RWPE1 (cell line): ENCODE measurements at regions of chr2 and their contacts with region 1.

Region 1: DNA sequence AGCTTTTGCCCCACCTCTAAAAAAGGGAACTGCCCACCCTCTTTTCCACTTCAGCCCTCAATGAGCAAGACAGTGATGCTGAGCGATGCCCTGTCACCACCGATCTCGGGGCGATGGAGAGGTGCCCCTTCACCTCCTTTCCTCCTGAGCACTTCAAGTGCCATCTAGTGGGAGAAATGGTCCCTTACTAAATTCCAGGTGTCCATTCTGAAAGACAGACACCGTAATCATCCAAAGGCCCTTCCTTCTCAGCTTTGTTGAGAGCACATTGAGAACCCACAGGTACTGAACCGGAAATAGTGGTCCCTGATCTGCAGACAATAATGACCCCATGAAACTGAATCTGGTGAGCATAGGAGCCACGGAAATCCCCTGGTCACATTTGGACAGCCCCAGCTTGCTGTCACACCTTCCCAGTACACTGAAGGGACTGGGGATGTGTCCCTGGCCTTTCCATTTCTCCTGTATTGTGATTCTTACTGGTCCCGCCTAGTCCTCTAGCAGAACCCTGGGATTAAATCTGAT is 38.5 kb downstream of the KCTD18 start:
- DNase-seq: peak; percentile 32
- H3K27ac ChIP-seq: no peak overlapping the region
- CTCF ChIP-seq: peak; percentile 70

Region 2: DNA sequence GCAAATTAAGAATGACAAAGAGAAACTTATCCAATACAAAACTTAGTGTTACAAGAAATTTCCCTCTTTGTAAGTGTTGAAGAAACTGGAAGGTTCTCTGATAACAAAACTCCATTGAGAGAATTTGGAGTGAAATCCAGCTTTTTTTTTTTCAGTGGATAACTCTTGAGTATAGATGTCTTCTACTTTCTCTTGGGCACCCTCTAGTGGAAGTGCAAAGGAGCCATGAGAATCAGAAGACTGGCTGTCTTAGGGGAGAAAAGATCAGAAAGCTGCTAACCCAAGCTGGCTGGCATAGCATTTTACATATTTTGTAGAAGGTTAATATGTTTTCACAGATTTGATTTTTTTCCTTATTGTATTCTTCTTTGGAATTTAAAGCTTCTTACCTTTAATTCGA is 874.8 kb before region 1 on chr2:
- CTCF ChIA-PET with region 1: no interaction called
- POLR2A ChIA-PET with region 1: no interaction called
- DNase-seq: peak; percentile 8
- H3K27ac ChIP-seq: no peak overlapping the region
- CTCF ChIP-seq: no peak; the same call in 1 of the 2 replicates

Region 3: DNA sequence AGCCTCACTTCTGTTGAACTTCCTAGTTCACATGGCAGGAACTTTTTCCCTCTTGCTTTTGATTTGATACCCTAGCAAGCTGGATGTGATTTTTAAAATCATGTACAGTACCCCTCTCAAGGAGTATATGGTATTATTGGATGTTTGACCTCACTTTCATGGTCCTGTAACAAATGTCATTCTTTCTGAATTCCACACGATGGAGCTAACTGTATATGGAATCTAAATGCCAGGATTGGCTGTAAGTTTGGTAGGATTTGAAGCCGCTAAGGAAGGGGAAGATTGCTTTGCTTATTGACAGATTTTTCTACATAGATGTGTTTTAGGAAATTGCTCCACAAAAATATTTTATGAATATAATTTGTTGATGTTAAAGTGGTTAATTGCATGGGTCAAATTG is 497.7 kb before region 1 on chr2:
- CTCF ChIA-PET with region 1: interaction called, 15 read pairs
- POLR2A ChIA-PET with region 1: no interaction called
- DNase-seq: peak; percentile 42
- H3K27ac ChIP-seq: no peak overlapping the region
- CTCF ChIP-seq: peak; percentile 57

Region 4: DNA sequence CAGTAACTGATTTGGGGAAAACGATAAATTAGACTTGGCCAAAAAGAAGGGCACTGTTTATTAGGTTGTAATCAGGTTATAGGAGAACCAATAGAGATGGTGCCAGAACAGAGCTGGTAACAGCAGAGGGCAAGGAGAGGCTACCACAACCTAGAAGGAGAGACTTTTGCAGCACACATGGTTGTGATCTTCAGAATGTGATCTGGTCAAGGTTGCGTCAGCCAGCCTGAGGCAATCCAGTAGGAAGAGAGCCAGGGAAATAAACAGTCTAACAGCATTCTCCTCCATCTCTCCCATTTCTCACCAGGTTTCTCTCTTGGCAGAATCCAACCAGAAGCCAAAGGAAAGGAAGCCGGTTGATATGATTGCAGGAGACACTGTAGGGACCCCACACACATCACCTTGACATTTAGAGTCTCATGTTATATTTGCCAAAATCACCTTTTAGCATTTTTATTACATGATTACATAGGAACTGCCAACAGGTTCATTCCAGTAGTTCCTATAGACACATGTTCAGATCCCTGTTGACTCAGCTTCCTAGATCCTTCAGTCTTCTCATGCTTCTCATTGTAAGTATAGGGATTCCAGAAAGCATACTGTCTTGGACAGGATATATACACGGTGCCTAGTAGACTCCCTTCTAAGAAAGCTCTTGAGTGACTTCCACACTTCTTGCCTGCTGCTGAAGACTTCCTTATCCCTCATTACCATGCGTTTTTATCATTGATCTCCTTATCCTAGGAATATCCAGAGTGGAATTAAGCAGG is 182.5 kb before region 1 on chr2:
- CTCF ChIA-PET with region 1: no interaction called
- POLR2A ChIA-PET with region 1: no interaction called
- DNase-seq: no peak
- H3K27ac ChIP-seq: no peak overlapping the region
- CTCF ChIP-seq: no peak